ENCODE measurements at regions of chr22 and their contacts with region 1.

Region 1: DNA sequence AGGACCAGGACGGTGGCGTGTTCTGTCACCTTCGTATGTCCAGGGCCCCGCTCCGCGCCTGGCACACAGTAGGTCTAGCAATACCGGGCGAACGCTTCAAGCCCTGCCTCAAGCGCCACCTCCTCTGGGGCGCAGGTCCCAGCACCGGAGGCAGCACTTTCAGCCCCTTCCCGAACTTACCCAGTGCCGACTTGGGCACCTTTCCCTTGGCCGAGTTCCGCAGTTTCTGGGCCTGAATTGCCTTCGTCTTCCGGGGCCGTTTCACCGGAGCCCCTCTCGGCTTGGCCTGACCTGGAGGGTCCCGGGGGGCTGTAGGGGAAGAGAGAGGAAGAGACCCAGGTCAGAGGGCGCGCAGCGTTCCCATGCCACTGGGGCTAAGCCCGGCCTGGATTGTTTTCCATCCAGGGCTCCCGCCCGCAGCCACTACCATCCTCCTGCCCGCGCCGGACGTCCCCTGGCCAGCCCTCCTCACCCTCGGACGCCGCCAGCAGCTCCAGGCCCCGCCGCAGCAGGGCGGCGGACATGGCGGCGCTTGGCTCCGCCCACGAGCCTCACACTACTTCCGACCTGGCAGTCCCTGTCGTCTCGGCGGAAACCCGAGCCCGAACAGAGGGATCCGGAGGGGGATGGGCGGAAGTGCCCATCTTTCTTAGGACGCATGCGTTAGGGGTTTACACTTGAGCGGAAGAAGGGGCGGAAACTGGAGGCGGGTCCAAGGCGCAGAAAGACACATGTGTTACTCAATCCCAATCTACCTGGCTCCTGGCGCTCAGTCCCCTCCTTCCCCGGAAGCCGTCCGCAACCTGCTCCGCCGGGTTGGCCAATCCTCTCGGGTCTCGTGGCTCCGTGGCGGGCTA is at the start of gene RPS19BP1:
- DNase-seq: peak; percentile 100
- ATAC-seq: peak; percentile 89
- H3K4me3 Mint-ChIP-seq: peak within 1 kb of the TSS; percentile 98
- H3K27ac Mint-ChIP-seq: peak within 1 kb of the TSS; percentile 92
- H3K4me1 Mint-ChIP-seq: peaks cover 51% of the 10 kb centered on the region
- H3K27me3 Mint-ChIP-seq: no peaks in the 10 kb centered on the region
- total RNA-seq, gene RPS19BP1: 42.8 to 68.8 TPM

Region 2: GRCh38 chr22:39319270-39320022 is 213.0 kb before region 1 on chr22 and contains the start of gene RPL3:
- CTCF ChIA-PET with region 1: interaction called, 26 read pairs
- POLR2A ChIA-PET with region 1: interaction called, 9 read pairs
- intact Hi-C with region 1: loop called in 1 of 2 experiments (anchors 1 kb)
- DNase-seq: peak; percentile 98
- ATAC-seq: peak; percentile 83
- H3K4me3 Mint-ChIP-seq: peak within 1 kb of the TSS; percentile 100
- H3K27ac Mint-ChIP-seq: peak within 1 kb of the TSS; percentile 100
- H3K4me1 Mint-ChIP-seq: peaks cover 32% of the 10 kb centered on the region
- H3K27me3 Mint-ChIP-seq: no peaks in the 10 kb centered on the region
- total RNA-seq, gene RPL3: 2,519 to 3,155 TPM

Region 3: DNA sequence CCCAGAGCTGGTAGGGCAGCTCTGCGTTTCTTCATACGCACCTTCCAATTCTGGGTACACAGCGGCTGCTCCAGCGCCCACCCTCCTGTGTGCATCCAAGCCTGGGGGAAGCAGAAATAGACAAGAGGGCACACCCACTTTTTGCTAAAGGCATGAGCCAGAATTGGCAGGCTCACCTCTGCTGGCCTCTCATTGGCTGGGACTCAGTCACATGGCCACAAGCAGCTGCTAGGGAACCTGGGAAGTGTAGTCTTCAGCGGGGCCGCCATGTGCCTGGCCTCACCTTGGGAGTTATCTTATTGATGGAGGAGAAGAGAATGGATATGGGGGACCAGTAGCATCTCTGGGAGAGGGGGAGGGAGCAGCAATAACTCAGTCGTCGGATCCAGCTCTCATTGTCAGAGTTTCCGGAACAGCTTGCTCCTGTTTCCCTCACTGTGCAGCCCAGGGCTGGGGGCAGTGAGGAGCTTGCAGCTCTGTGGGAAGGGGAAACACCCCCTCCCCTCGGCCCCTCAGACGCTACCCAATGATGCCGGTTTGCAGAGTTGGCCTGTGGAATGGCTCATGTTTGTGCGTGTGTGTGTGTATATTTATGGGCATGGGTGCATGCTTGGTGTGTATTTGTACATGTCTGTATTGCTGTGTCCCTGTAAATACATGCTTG is 42.2 kb before region 1 on chr22:
- CTCF ChIA-PET with region 1: interaction called, 100 read pairs
- POLR2A ChIA-PET with region 1: interaction called, 7 read pairs
- intact Hi-C with region 1: loop called (anchors 1 kb)
- DNase-seq: peak; percentile 89
- ATAC-seq: peak; percentile 100
- H3K4me3 Mint-ChIP-seq: no peak overlapping the region
- H3K27ac Mint-ChIP-seq: no peak overlapping the region
- H3K4me1 Mint-ChIP-seq: peaks cover 7% of the 10 kb centered on the region
- H3K27me3 Mint-ChIP-seq: no peaks in the 10 kb centered on the region

Region 4: DNA sequence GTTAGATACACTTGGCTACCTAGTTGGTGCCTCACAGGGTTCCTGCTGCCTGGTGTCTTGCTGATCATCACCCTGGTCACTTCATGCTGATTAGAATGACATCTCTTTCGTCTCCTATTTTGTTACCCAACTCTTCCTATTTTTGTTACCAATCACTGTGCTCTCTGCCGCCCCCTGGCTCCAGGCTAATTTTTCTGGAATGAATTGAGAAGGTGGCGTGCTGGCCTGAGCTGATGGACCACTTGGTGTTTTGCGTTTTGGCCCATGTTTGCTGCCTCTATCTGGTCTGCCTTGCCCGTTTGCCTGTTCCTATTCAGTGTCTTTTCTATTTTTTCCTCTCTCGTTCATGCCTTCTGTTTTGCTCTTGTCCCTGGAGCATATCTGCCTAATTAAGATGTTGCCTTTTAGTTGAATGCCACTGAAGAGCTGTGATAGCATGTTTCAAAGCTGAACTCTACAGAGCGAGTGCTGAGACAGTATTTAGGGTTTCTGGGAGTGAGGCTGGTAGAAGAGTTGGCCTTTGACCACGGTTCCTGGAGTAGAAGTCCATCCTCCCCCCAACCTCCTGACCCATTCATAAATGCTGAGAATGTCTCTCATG is 18.0 kb before region 1 on chr22:
- CTCF ChIA-PET with region 1: interaction called, 42 read pairs
- POLR2A ChIA-PET with region 1: interaction called, 27 read pairs
- intact Hi-C with region 1: no loop called
- DNase-seq: peak; percentile 72
- ATAC-seq: no peak
- H3K4me3 Mint-ChIP-seq: no peak overlapping the region
- H3K27ac Mint-ChIP-seq: peak overlapping the region; percentile 38
- H3K4me1 Mint-ChIP-seq: peaks cover 47% of the 10 kb centered on the region
- H3K27me3 Mint-ChIP-seq: no peaks in the 10 kb centered on the region

Region 5: GRCh38 chr22:39908737-39909136 is 376.3 kb after region 1 on chr22:
- CTCF ChIA-PET with region 1: interaction called, 3 read pairs
- POLR2A ChIA-PET with region 1: no interaction called
- intact Hi-C with region 1: loop called (anchors 5 to 10 kb)
- DNase-seq: peak; percentile 71
- ATAC-seq: peak; percentile 50
- H3K4me3 Mint-ChIP-seq: peak overlapping the region; percentile 86
- H3K27ac Mint-ChIP-seq: peak overlapping the region; percentile 100
- H3K4me1 Mint-ChIP-seq: peaks cover 75% of the 10 kb centered on the region
- H3K27me3 Mint-ChIP-seq: no peaks in the 10 kb centered on the region

Region 6: GRCh38 chr22:40024201-40025061 is 492.0 kb after region 1 on chr22:
- CTCF ChIA-PET with region 1: interaction called, 43 read pairs
- POLR2A ChIA-PET with region 1: no interaction called
- intact Hi-C with region 1: loop called (anchors 1 to 5 kb)
- DNase-seq: peak; percentile 82
- ATAC-seq: peak; percentile 85
- H3K4me3 Mint-ChIP-seq: no peak overlapping the region
- H3K27ac Mint-ChIP-seq: no peak overlapping the region
- H3K4me1 Mint-ChIP-seq: no peaks in the 10 kb centered on the region
- H3K27me3 Mint-ChIP-seq: no peaks in the 10 kb centered on the region

Region 7: DNA sequence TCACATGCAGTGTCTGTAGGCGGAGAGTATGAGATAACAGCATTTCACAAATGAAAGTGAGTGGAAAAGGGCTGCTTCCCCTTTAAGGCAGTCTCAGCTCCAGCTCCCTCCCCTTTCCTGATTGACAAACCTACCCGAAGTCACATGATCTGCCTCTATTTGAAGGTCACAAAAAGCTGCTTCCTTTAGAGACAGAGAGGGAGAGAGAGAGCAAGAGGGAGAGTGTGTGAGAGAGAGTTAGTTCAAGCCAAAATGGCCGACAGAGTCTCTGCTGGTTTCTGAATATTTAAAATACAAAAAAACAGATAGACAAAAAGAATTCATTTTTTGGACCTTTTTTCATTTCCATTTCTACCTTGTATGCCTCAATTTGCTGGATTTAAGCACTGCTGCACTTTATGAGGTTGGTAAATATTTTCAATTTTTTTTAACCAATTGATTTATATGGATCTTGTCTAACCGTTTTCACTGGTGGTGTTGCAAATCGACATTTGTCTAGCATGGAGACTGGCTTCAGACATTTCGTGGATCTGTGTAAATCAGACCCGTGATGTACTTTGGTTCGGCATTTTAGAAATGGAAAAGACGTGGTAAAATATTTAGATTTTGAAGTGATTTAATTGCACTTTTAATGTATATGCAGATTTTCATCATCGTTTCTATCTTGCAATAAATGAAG is 645.4 kb after region 1 on chr22 and contains the start of gene TNRC6B:
- CTCF ChIA-PET with region 1: no interaction called
- POLR2A ChIA-PET with region 1: no interaction called
- intact Hi-C with region 1: loop called in 1 of 2 experiments (anchors 1 kb)
- DNase-seq: peak; percentile 82
- ATAC-seq: peak; percentile 77
- H3K4me3 Mint-ChIP-seq: peak within 1 kb of the TSS; percentile 89
- H3K27ac Mint-ChIP-seq: peak within 1 kb of the TSS; percentile 92
- H3K4me1 Mint-ChIP-seq: peaks cover 57% of the 10 kb centered on the region
- H3K27me3 Mint-ChIP-seq: no peaks in the 10 kb centered on the region
- total RNA-seq, gene TNRC6B: 37.3 to 40.3 TPM